GM12878 (cell line): ENCODE measurements at regions of chr6 and their contacts with region 1.

Region 1: GRCh38 chr6:24910961-24911712 is 24.6 kb downstream of the RIPOR2 start:
- DNase-seq: no peak
- ATAC-seq: peak; percentile 47
- H3K4me3 ChIP-seq: peak overlapping the region; percentile 86
- H3K27ac ChIP-seq: peak overlapping the region; percentile 60
- H3K4me1 ChIP-seq: peaks cover 26% of the 10 kb centered on the region
- H3K27me3 ChIP-seq: no peaks in the 10 kb centered on the region
- CTCF ChIP-seq: no peak
- EP300 ChIP-seq: no peak
- POLR2A ChIP-seq: no peak; the same call in 1 of the 2 replicates
- RAD21 ChIP-seq: no peak

Region 2: DNA sequence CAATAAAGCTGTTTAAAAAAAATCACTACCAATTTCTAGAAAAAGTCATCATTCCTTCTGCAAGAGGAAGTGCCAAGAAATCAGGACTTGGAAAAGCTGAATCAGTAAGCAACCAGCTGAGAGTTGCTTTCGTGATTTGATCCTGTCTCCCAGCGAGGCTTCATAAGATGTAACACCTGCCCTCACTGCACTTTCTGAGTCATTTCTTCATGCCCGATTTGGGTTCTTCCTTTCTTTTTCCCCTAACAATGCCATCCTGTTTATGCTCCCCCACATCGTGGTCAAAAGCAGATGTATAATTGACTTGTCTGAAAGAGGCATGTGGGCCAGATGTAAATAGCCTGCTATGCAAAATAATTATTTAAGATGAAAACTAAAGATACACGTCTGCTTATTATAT is 27.5 kb before region 1 on chr6:
- CTCF ChIA-PET with region 1: interaction called, 17 read pairs
- POLR2A ChIA-PET with region 1: interaction called, 7 read pairs
- RAD21 ChIA-PET with region 1: interaction called, 15 read pairs
- SMC1A ChIA-PET with region 1: interaction called, 34 read pairs
- in situ Hi-C with region 1: no loop called
- intact Hi-C with region 1: no loop called
- DNase-seq: peak; percentile 84
- ATAC-seq: peak; percentile 90
- H3K4me3 ChIP-seq: no peak overlapping the region
- H3K27ac ChIP-seq: peak overlapping the region; percentile 60; the same call in 1 of the 2 replicates
- H3K4me1 ChIP-seq: peaks cover 33% of the 10 kb centered on the region
- H3K27me3 ChIP-seq: no peaks in the 10 kb centered on the region
- CTCF ChIP-seq: no peak
- EP300 ChIP-seq: peak; percentile 54 to 74; a peak in 3 of 4 replicates
- POLR2A ChIP-seq: no peak
- RAD21 ChIP-seq: no peak

Region 3: GRCh38 chr6:24891004-24891403 is 20.1 kb before region 1 on chr6:
- CTCF ChIA-PET with region 1: interaction called, 17 read pairs
- POLR2A ChIA-PET with region 1: interaction called, 4 read pairs
- RAD21 ChIA-PET with region 1: interaction called, 15 read pairs
- SMC1A ChIA-PET with region 1: interaction called, 17 read pairs
- in situ Hi-C with region 1: no loop called
- intact Hi-C with region 1: no loop called
- DNase-seq: no peak
- ATAC-seq: no peak
- H3K4me3 ChIP-seq: no peak overlapping the region
- H3K27ac ChIP-seq: no peak overlapping the region
- H3K4me1 ChIP-seq: peaks cover 15% of the 10 kb centered on the region
- H3K27me3 ChIP-seq: no peaks in the 10 kb centered on the region
- CTCF ChIP-seq: no peak
- EP300 ChIP-seq: no peak
- POLR2A ChIP-seq: no peak
- RAD21 ChIP-seq: no peak

Region 4: DNA sequence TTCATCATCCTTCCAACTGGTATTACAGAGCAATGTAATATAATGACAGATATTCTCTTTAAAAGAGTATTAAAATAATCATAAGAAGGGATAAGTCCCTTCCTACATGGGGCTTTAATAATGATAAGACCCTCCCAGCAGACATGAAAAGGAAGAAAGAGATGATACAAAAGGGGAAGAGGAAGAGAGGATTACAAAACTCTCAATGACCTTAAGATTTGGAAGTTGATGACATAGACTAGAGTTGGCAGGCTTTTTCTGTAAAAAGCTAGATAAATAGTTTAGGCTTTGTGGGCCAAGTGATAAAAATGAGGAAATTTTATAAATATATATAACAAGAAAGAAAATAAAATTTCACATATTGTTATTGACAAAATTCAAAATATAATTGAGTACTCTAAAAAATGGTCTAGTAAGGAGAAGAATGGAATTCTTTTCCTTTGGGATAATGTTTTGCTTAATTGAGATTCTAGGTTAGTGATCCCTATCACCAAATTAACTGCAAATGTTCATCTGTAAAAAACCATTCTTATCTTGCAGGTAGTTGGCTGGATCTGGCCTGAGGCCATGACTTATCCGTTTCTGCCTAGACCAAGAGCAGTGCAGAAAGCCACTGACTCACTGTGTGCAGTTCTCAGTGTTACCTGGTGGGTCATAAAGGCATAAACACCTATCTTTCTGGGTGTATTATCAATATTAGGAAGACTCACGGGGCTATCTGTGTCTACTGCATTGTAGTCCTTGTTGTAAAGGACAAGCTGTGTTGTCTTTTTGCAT is 13.6 kb after region 1 on chr6:
- CTCF ChIA-PET with region 1: interaction called, 139 read pairs
- POLR2A ChIA-PET with region 1: interaction called, 14 read pairs
- RAD21 ChIA-PET with region 1: interaction called, 31 read pairs
- SMC1A ChIA-PET with region 1: interaction called, 201 read pairs
- in situ Hi-C with region 1: no loop called
- intact Hi-C with region 1: no loop called
- DNase-seq: no peak
- ATAC-seq: 0 out of 3 replicates have a peak, but pooled peaks have one; percentile 9
- H3K4me3 ChIP-seq: no peak overlapping the region
- H3K27ac ChIP-seq: no peak overlapping the region
- H3K4me1 ChIP-seq: peaks cover 42% of the 10 kb centered on the region
- H3K27me3 ChIP-seq: no peaks in the 10 kb centered on the region
- CTCF ChIP-seq: no peak
- EP300 ChIP-seq: no peak
- POLR2A ChIP-seq: no peak
- RAD21 ChIP-seq: no peak

Region 5: DNA sequence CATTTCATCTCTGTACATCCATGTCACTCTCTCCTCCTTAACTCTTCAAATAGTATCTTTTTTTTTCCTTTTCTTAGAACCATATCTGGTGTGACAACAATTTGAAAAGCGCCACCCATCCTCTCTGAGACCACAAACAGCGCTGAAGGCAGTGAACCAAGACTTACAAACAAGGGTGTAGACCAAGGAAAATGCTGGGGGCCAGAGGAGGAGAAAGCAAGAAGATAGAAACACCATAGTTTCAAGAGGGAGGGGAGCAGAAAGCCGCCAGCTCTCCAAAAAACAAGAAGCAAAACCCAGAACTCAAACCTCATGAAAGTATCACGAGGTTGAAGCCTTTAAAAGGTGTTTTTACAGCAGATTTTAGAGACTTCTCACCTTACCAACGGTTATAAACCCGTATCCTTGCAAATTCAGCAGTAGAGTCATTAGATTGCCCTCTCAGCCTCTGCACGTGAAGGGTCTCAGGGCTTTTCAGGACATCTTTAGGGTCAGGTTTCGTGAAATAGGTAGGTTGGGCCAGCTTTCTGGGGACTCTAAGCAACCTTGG is 38.0 kb after region 1 on chr6:
- CTCF ChIA-PET with region 1: interaction called, 4 read pairs
- POLR2A ChIA-PET with region 1: no interaction called
- RAD21 ChIA-PET with region 1: interaction called, 6 read pairs
- SMC1A ChIA-PET with region 1: interaction called, 11 read pairs
- in situ Hi-C with region 1: no loop called
- intact Hi-C with region 1: no loop called
- DNase-seq: peak; percentile 96
- ATAC-seq: peak; percentile 96
- H3K4me3 ChIP-seq: peak overlapping the region; percentile 28; the same call in 1 of the 2 replicates
- H3K27ac ChIP-seq: peak overlapping the region; percentile 84
- H3K4me1 ChIP-seq: peaks cover 46% of the 10 kb centered on the region
- H3K27me3 ChIP-seq: no peaks in the 10 kb centered on the region
- CTCF ChIP-seq: no peak
- EP300 ChIP-seq: peak; percentile 78 to 85; a peak in 2 of 4 replicates
- POLR2A ChIP-seq: no peak
- RAD21 ChIP-seq: peak; percentile 9; the same call in 1 of the 2 replicates

Region 6: GRCh38 chr6:25006565-25007001 is 95.4 kb after region 1 on chr6:
- CTCF ChIA-PET with region 1: interaction called, 4 read pairs
- POLR2A ChIA-PET with region 1: no interaction called
- RAD21 ChIA-PET with region 1: interaction called, 17 read pairs
- SMC1A ChIA-PET with region 1: interaction called, 12 read pairs
- in situ Hi-C with region 1: no loop called
- intact Hi-C with region 1: no loop called
- DNase-seq: no peak
- ATAC-seq: peak; percentile 72
- H3K4me3 ChIP-seq: 0 out of 2 replicates have a peak overlapping the region, but pooled peaks have one; percentile 28
- H3K27ac ChIP-seq: peak overlapping the region; percentile 46; the same call in 1 of the 2 replicates
- H3K4me1 ChIP-seq: peaks cover 14% of the 10 kb centered on the region
- H3K27me3 ChIP-seq: no peaks in the 10 kb centered on the region
- CTCF ChIP-seq: no peak
- EP300 ChIP-seq: peak in 1 of 2 experiments; percentile 44; a peak in 1 of 4 replicates
- POLR2A ChIP-seq: no peak
- RAD21 ChIP-seq: no peak

Region 7: GRCh38 chr6:25053875-25054371 is 142.8 kb after region 1 on chr6:
- CTCF ChIA-PET with region 1: interaction called, 9 read pairs
- POLR2A ChIA-PET with region 1: no interaction called
- RAD21 ChIA-PET with region 1: interaction called, 7 read pairs
- SMC1A ChIA-PET with region 1: interaction called, 10 read pairs
- in situ Hi-C with region 1: no loop called
- intact Hi-C with region 1: no loop called
- DNase-seq: no peak
- ATAC-seq: peak; percentile 93
- H3K4me3 ChIP-seq: no peak overlapping the region
- H3K27ac ChIP-seq: peak overlapping the region; percentile 41
- H3K4me1 ChIP-seq: peaks cover 26% of the 10 kb centered on the region
- H3K27me3 ChIP-seq: no peaks in the 10 kb centered on the region
- CTCF ChIP-seq: peak in 2 of 3 experiments; percentile 16 to 20; a peak in 2 of 6 replicates
- EP300 ChIP-seq: peak in 1 of 2 experiments; percentile 29; a peak in 1 of 4 replicates
- POLR2A ChIP-seq: no peak
- RAD21 ChIP-seq: peak; percentile 21; the same call in 1 of the 2 replicates